ENCODE measurements at regions of chr3 and their contacts with region 1.

Region 1: DNA sequence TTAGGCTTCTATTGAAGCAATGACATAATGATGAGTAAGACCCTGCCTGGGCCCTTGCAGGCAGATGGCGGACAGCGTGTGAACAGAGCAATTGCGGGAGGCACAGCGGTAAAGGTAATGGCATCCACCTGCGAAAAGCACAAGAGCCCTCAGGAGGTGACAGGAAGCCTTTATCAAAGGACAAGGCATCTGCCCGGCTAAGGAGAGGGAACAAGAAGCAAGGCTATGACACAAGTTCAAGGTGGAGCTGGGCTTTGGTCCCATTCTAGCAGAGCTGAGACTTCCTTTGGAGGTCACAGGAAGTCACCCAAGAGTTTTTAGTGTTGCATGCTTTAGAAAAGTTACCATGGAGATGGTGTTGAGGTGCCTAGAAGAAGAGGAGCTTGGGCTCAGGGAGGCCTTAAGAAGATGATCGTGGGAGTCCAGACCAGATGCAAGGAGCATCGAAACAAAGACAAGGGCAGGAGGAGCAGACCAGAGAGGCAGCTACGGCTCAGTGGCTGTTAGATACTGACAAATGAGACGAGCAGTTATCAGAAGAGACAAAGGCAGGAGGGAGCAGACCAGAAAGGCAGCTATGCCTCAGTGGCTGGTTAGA is 34.5 kb downstream of the OSBPL10 start:
- DNase-seq: peak; percentile 82
- H3K4me3 ChIP-seq: peak overlapping the region; percentile 57
- H3K27ac ChIP-seq: peak overlapping the region; percentile 100
- H3K4me1 ChIP-seq: peaks cover 99% of the 10 kb centered on the region
- CTCF ChIP-seq: no peak

Region 2: GRCh38 chr3:31876331-31876730 is 70.3 kb before region 1 on chr3:
- CTCF ChIA-PET with region 1: no interaction called
- POLR2A ChIA-PET with region 1: interaction called, 10 read pairs
- intact Hi-C with region 1: no loop called
- DNase-seq: no peak
- H3K4me3 ChIP-seq: peak overlapping the region; percentile 68
- H3K27ac ChIP-seq: peak overlapping the region; percentile 90
- H3K4me1 ChIP-seq: peaks cover 83% of the 10 kb centered on the region
- CTCF ChIP-seq: no peak

Region 3: DNA sequence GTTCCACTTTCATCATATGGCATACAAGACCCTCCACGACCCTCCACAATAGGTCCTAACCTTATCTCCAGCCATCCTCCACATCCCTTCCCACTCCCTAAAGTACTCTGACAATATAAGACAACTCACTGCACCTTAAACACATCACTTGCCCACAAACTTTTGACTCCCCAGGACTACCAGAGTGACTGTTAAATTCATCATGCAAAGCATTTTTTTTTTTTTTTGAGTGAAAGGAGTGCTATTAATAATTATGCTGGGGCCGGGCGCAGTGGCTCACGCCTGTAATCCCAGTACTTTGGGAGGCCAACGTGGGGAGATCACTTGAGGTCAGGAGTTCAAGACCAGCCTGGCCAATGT is 21.3 kb before region 1 on chr3:
- CTCF ChIA-PET with region 1: no interaction called
- POLR2A ChIA-PET with region 1: interaction called, 141 read pairs
- intact Hi-C with region 1: loop called (anchors 2 kb)
- DNase-seq: peak; percentile 60
- H3K4me3 ChIP-seq: peak overlapping the region; percentile 53
- H3K27ac ChIP-seq: peak overlapping the region; percentile 94
- H3K4me1 ChIP-seq: peaks cover 99% of the 10 kb centered on the region
- CTCF ChIP-seq: no peak

Region 4: DNA sequence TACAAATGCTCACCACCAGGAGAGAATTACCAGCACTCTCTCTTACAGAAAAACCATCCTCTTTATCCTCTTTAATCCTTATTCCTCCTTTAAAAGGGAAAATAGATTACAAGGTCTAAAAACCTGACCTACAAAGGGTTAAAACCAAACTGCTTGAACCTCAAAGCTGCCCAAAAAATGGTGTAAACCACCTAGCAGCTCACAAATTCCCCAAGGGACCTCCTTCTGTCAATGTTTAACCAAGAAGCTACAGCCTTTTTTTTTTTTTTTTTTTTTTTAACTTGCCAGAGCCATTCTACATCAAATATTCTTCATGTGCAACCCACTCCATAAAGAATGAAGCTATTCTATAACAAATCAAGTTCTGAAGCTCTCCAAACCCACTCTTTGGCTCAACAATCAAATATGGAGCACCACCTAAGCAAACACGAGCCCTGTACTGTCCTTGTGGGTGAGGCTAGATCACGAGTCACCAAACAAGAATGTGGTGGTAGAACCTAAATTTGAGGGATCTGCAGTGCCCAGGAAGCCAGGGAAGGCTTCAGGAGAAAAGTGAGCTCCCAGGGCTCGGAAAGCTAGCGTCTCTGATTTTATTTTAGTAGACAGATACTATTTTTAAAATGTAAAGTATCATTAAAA is 14.3 kb after region 1 on chr3:
- CTCF ChIA-PET with region 1: interaction called, 4 read pairs
- POLR2A ChIA-PET with region 1: interaction called, 81 read pairs
- intact Hi-C with region 1: no loop called
- DNase-seq: peak; percentile 85
- H3K4me3 ChIP-seq: peak overlapping the region; percentile 65
- H3K27ac ChIP-seq: peak overlapping the region; percentile 91
- H3K4me1 ChIP-seq: peaks cover 82% of the 10 kb centered on the region
- CTCF ChIP-seq: no peak